ENCODE measurements at regions of chr13 and their contacts with region 1.

Region 1: DNA sequence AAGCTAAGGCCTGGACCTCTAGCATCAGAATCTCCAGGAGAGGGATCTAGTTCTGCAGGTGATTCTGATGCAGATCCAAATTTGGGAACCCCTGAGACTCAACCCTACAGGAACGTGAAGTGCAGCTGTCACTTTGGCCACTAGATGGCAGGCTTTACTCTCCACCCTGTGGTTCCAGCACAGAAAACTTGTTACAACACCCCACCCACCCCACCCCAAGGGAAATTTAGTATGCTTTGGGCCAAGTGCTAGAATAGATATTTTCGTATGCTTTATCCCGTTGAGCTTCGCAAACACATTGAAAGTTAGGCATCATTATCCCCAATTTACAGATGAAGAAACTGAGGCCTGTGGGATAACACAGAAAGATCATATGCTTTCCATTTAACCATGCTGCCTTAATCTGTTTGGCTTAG is 232.0 kb downstream of the B3GLCT start:
- DNase-seq: no peak
- H3K4me3 ChIP-seq: no peak overlapping the region
- CTCF ChIP-seq: peak; percentile 81

Region 2: GRCh38 chr13:31441800-31442506 is 10.2 kb after region 1 on chr13:
- CTCF ChIA-PET with region 1: interaction called, 12 read pairs
- POLR2A ChIA-PET with region 1: no interaction called
- DNase-seq: no peak
- H3K4me3 ChIP-seq: no peak overlapping the region
- CTCF ChIP-seq: no peak

Region 3: DNA sequence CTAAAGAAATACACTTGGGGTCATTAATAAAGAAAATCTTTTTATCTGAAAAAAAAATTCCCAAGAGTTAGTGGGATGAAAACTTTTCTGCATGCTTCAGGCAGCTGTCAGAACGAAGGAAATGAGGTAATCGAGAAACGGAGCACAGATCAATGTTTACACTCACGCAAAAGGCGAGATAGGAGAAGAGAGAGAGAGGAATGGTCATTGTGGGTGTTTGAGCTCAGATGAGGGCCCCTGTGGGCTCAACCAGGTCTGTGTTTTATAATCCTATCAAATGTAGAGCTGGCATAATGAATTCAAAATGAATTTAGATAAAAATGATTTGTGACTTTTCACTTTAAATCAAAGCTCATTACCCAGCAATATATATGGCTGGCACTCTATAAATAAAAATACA is 301.3 kb after region 1 on chr13:
- CTCF ChIA-PET with region 1: interaction called, 15 read pairs
- POLR2A ChIA-PET with region 1: no interaction called
- DNase-seq: no peak
- H3K4me3 ChIP-seq: no peak overlapping the region
- CTCF ChIP-seq: no peak

Region 4: GRCh38 chr13:31742097-31742734 is 310.5 kb after region 1 on chr13:
- CTCF ChIA-PET with region 1: interaction called, 40 read pairs
- POLR2A ChIA-PET with region 1: no interaction called
- DNase-seq: no peak
- H3K4me3 ChIP-seq: no peak overlapping the region
- CTCF ChIP-seq: peak; percentile 82

Region 5: DNA sequence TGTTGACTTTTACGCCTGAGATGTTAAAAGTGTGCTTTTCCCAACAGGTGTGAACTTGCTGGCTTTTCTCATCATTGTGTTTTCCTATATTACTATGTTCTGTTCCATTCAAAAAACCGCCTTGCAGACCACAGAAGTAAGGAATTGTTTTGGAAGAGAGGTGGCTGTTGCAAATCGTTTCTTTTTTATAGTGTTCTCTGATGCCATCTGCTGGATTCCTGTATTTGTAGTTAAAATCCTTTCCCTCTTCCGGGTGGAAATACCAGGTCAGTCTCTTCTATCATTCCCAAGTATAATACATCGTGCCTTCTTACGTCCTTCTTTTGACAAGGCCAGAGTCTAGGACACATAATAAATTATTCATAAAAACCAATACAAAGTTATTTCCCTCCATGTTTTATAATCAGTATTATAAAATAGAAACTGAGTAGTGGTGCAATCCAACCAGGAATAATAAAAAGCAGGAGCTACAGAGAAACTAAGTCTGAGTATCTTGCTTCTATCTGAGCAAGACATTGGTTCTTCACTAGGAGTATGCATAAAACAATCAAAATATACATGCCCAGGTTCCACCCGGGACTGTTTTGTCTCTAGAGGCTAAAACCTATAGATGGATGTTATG is 365.5 kb after region 1 on chr13:
- CTCF ChIA-PET with region 1: interaction called, 15 read pairs
- POLR2A ChIA-PET with region 1: no interaction called
- DNase-seq: no peak
- H3K4me3 ChIP-seq: no peak overlapping the region
- CTCF ChIP-seq: peak; percentile 27

Measured in AG04449 (cell line).